Dendritic cell treated with granulocyte-macrophage colony-stimulating factor and Interleukin-4, amounts not matched to agents 40 ng/mL and 50 ng/mL, for 4 days (primary cell): ENCODE measurements at regions of chr16 and their contacts with region 1.

Region 1: GRCh38 chr16:77190478-77191258 is at the start of gene MON1B:
- H3K4me3 Mint-ChIP-seq: peak within 1 kb of the TSS; percentile 87
- H3K27ac Mint-ChIP-seq: peak within 1 kb of the TSS; percentile 99
- H3K4me1 Mint-ChIP-seq: peaks cover 37% of the 10 kb centered on the region
- H3K27me3 Mint-ChIP-seq: peaks cover 8% of the 10 kb centered on the region

Region 2: GRCh38 chr16:77059446-77059845 is 131.2 kb before region 1 on chr16:
- intact Hi-C with region 1: no loop called
- H3K4me3 Mint-ChIP-seq: no peak overlapping the region
- H3K27ac Mint-ChIP-seq: no peak overlapping the region
- H3K4me1 Mint-ChIP-seq: no peaks in the 10 kb centered on the region
- H3K27me3 Mint-ChIP-seq: no peaks in the 10 kb centered on the region

Region 3: DNA sequence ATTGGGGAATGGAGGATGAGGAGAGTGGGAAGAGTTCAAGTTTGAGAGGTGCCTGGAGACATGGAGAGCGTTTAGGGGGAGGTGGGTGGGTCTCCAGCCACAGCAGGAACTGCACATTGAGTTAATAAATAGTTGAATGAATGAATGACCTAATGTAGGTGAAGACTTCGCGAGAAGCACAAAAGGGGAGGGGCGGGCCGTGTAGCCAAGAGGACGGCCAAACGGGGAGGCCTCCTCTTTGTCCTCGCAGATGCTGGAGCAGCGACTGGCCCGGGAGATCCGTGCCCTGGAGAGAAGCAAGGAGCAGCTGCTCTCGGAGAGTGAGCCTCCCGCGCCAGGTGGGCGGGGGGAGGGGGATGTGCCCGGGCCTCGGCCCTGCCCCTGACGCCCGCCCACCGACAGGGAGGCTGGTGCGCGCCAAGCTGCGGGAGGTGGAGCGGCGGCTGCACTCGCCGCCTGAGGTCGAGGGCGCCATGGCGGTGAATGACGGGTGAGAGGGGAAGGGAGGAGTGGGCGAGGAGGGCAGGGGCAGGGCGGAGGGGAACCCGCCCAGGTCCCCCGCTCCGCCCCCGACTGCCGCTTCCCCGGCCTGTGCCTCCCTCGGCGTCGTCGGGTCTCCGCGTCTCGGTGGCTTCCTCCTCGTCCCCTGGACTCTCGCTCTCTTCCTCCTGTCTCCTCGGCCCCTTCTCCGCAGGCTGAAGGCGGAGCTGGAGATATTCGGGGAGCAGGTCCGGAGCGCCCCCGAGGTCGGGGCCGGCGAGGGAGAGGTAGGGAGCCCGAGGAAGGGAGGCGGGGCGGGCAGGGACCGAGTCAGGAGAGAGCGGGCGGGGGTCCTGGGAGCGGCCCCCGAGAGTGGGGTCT is 21.4 kb after region 1 on chr16:
- intact Hi-C with region 1: loop called (anchors 2 kb)
- H3K4me3 Mint-ChIP-seq: peak overlapping the region; percentile 77
- H3K27ac Mint-ChIP-seq: peak overlapping the region; percentile 68
- H3K4me1 Mint-ChIP-seq: peaks cover 35% of the 10 kb centered on the region
- H3K27me3 Mint-ChIP-seq: peaks cover 18% of the 10 kb centered on the region